Activated CD4-positive, alpha-beta T cell treated with anti-CD3 and anti-CD28 coated beads, Interleukin-2, amount 10 ng/mL, durations not matched to agents 24 days and 14 days (primary cell): ENCODE measurements at regions of chr7 and their contacts with region 1.

Region 1: GRCh38 chr7:152145853-152146466 is 120.5 kb downstream of the GALNT11 start:
- DNase-seq: peak; percentile 76
- H3K4me3 Mint-ChIP-seq: peak overlapping the region; percentile 68
- H3K27ac Mint-ChIP-seq: peak overlapping the region; percentile 89
- H3K4me1 Mint-ChIP-seq: peaks cover 34% of the 10 kb centered on the region
- H3K27me3 Mint-ChIP-seq: no peaks in the 10 kb centered on the region

Region 2: GRCh38 chr7:151782598-151783448 is 363.1 kb before region 1 on chr7:
- intact Hi-C with region 1: loop called (anchors 5 kb)
- DNase-seq: peak; percentile 89
- H3K4me3 Mint-ChIP-seq: peak overlapping the region; percentile 80
- H3K27ac Mint-ChIP-seq: peak overlapping the region; percentile 86
- H3K4me1 Mint-ChIP-seq: peaks cover 7% of the 10 kb centered on the region
- H3K27me3 Mint-ChIP-seq: no peaks in the 10 kb centered on the region

Region 3: DNA sequence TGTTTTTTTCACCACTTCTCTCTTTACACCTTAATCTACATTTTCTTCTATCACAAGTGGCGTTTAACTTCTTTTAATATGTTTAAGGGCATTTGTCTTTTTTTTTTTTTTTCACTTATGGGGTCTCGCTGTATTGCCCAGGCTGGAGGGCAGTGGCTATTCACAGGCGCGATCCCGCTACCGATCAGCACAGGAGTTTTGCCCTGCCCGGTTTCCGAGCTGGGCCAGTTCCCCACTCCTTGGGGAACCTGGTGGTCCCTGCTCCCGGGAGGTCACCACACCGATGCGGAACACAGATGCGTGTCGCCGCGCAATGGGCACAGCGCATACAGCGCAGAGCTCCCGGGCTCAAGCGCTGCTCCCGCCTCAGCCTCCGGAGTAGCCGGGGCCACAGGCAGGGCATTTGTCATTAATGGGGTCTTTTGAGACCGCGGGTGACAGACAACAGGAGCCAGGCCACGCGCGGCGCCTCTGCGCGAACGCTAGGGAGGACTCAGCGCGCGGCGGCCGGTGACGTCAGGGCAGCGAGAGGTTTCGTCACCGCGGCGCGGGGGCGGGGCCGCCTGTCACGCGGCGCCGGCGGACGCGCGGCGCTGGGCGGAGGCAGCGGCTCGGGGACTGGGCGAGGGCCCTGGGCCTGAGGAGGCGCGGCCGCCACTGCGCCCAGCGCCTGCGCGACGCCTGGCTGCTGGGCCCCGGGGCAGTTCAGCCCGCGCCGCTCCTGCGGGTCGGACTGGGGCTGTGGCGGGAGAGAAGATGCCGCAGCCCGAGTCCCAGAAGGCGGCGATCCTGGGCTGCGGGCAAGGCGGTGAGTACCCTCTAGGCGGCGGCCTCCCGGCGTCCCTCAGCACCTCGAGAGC is 120.7 kb before region 1 on chr7 and contains the start of gene GALNT11:
- intact Hi-C with region 1: loop called (anchors 10 kb)
- DNase-seq: peak; percentile 97
- H3K4me3 Mint-ChIP-seq: peak within 1 kb of the TSS; percentile 88
- H3K27ac Mint-ChIP-seq: peak within 1 kb of the TSS; percentile 85
- H3K4me1 Mint-ChIP-seq: peaks cover 23% of the 10 kb centered on the region
- H3K27me3 Mint-ChIP-seq: peaks cover 16% of the 10 kb centered on the region
- total RNA-seq, gene GALNT11: 22.0 and 22.1 TPM in 2 replicates

Region 4: GRCh38 chr7:152366662-152367061 is 220.7 kb after region 1 on chr7:
- intact Hi-C with region 1: no loop called
- DNase-seq: no peak
- H3K4me3 Mint-ChIP-seq: no peak overlapping the region
- H3K27ac Mint-ChIP-seq: no peak overlapping the region
- H3K4me1 Mint-ChIP-seq: peaks cover 22% of the 10 kb centered on the region
- H3K27me3 Mint-ChIP-seq: no peaks in the 10 kb centered on the region